ENCODE measurements at regions of chr1 and their contacts with region 1.

Region 1: GRCh38 chr1:52455686-52456085 is 51.3 kb downstream of the PRPF38A start:
- DNase-seq: no peak
- H3K4me3 ChIP-seq: no peak overlapping the region
- H3K27ac ChIP-seq: no peak overlapping the region
- H3K4me1 ChIP-seq: no peaks in the 10 kb centered on the region
- H3K27me3 ChIP-seq: no peaks in the 10 kb centered on the region
- CTCF ChIP-seq: no peak
- POLR2A ChIP-seq: no peak

Region 2: GRCh38 chr1:52511851-52512615 is 56.3 kb after region 1 on chr1:
- CTCF ChIA-PET with region 1: no interaction called
- POLR2A ChIA-PET with region 1: no interaction called
- dilution Hi-C with region 1: no loop called
- intact Hi-C with region 1: loop called (anchors 10 kb)
- DNase-seq: no peak
- H3K4me3 ChIP-seq: no peak overlapping the region
- H3K27ac ChIP-seq: no peak overlapping the region
- H3K4me1 ChIP-seq: no peaks in the 10 kb centered on the region
- H3K27me3 ChIP-seq: no peaks in the 10 kb centered on the region
- CTCF ChIP-seq: no peak
- POLR2A ChIP-seq: no peak

Region 3: GRCh38 chr1:52613636-52614373 is 158.1 kb after region 1 on chr1:
- CTCF ChIA-PET with region 1: no interaction called
- POLR2A ChIA-PET with region 1: no interaction called
- dilution Hi-C with region 1: no loop called
- intact Hi-C with region 1: no loop called
- DNase-seq: peak; percentile 57
- H3K4me3 ChIP-seq: no peak overlapping the region
- H3K27ac ChIP-seq: no peak overlapping the region
- H3K4me1 ChIP-seq: no peaks in the 10 kb centered on the region
- H3K27me3 ChIP-seq: peaks cover 7 to 16% of the 10 kb centered on the region in 2 experiments
- CTCF ChIP-seq: no peak
- POLR2A ChIP-seq: no peak

Measured in endothelial cell of umbilical vein (primary cell).